GM10248 (cell line): ENCODE measurements at regions of chr2 and their contacts with region 1.

Region 1: GRCh38 chr2:196783431-196784094 is 15.9 kb downstream of the GTF3C3 start:
- DNase-seq: peak; percentile 18
- CTCF ChIP-seq: no peak

Region 2: GRCh38 chr2:196798980-196799379 is 15.4 kb after region 1 on chr2:
- CTCF ChIA-PET with region 1: interaction called, 17 read pairs
- POLR2A ChIA-PET with region 1: no interaction called
- DNase-seq: peak; percentile 18
- CTCF ChIP-seq: no peak

Region 3: DNA sequence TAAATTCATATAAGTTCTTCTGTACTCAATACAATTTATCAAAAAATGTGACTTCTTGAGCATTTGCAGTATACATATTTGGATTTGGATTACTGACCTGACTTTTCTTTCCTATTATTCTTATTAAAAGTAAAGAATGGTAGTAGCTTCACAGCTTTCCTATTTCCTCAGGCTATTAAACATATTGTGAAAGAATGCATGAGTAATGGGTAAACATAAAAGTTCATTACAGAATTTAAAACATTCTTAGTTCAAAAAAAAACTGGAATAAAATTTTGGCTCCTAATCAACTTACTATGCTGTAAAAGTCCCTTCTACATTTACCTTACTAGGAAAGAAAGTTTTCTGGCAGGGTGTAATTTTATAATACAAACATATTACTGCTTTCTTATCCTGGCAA is 52.9 kb after region 1 on chr2:
- CTCF ChIA-PET with region 1: no interaction called
- POLR2A ChIA-PET with region 1: no interaction called
- DNase-seq: no peak
- CTCF ChIP-seq: no peak